HCT116 (cell line): ENCODE measurements at regions of chr14 and their contacts with region 1.

Region 1: GRCh38 chr14:97713023-97713422 is 915.8 kb downstream of the VRK1 start:
- DNase-seq: peak; percentile 73
- ATAC-seq: peak; percentile 73
- H3K4me3 ChIP-seq: no peak overlapping the region
- H3K27ac ChIP-seq: no peak overlapping the region
- H3K4me1 ChIP-seq: peaks cover 0 to 30% of the 10 kb centered on the region in 2 experiments; a peak in 2 of 4 replicates
- H3K27me3 ChIP-seq: no peaks in the 10 kb centered on the region
- CTCF ChIP-seq: no peak
- POLR2A ChIP-seq: no peak
- RAD21 ChIP-seq: no peak

Region 2: DNA sequence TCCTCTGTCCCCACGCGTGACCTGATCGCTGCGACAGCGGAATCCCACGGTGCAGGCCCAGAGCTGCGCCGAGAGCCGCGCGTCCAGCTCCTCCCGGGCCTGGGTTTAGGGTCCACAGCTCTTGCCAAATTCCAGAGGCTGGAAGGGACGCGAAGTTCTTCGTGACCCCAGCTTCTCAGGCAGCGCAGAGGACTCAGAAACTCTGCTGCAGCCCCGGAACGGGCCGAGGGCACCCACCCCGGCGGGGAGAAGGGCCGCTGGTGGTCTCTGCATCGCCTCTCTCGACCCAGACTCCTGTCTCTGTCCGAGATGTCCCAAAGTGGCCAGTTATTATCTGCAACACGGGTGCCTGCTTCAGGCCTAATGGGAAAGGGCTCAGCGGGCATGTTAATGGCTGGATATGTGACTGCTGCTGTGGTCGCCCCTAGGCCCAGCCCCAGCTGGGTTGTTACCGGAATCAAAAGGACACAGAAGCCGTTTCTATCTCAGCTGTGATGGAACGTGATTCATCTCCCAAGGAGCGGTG is 679.4 kb before region 1 on chr14:
- CTCF ChIA-PET with region 1: no interaction called
- POLR2A ChIA-PET with region 1: no interaction called
- RAD21 ChIA-PET with region 1: no interaction called
- intact Hi-C with region 1: no loop called
- DNase-seq: no peak
- ATAC-seq: no peak
- H3K4me3 ChIP-seq: no peak overlapping the region
- H3K27ac ChIP-seq: no peak overlapping the region
- H3K4me1 ChIP-seq: no peaks in the 10 kb centered on the region
- H3K27me3 ChIP-seq: no peaks in the 10 kb centered on the region
- CTCF ChIP-seq: no peak
- POLR2A ChIP-seq: no peak
- RAD21 ChIP-seq: no peak

Region 3: GRCh38 chr14:97185186-97185585 is 527.8 kb before region 1 on chr14:
- CTCF ChIA-PET with region 1: no interaction called
- POLR2A ChIA-PET with region 1: no interaction called
- RAD21 ChIA-PET with region 1: no interaction called
- intact Hi-C with region 1: loop called (anchors 10 kb)
- DNase-seq: no peak
- ATAC-seq: peak; percentile 45
- H3K4me3 ChIP-seq: no peak overlapping the region
- H3K27ac ChIP-seq: no peak overlapping the region
- H3K4me1 ChIP-seq: peaks cover 8 to 16% of the 10 kb centered on the region in 2 experiments
- H3K27me3 ChIP-seq: no peaks in the 10 kb centered on the region
- CTCF ChIP-seq: peak; percentile 59 to 68 (median 61); a peak in 5 of 6 replicates
- POLR2A ChIP-seq: no peak
- RAD21 ChIP-seq: peak; percentile 79

Region 4: GRCh38 chr14:97264516-97265230 is 448.4 kb before region 1 on chr14:
- CTCF ChIA-PET with region 1: no interaction called
- POLR2A ChIA-PET with region 1: no interaction called
- RAD21 ChIA-PET with region 1: no interaction called
- intact Hi-C with region 1: no loop called
- DNase-seq: no peak
- ATAC-seq: peak; percentile 56
- H3K4me3 ChIP-seq: no peak overlapping the region
- H3K27ac ChIP-seq: no peak overlapping the region
- H3K4me1 ChIP-seq: peaks cover 26 to 47% of the 10 kb centered on the region in 2 experiments
- H3K27me3 ChIP-seq: no peaks in the 10 kb centered on the region
- CTCF ChIP-seq: no peak
- POLR2A ChIP-seq: no peak
- RAD21 ChIP-seq: no peak

Region 5: GRCh38 chr14:98059106-98059505 is 346.1 kb after region 1 on chr14:
- CTCF ChIA-PET with region 1: no interaction called
- POLR2A ChIA-PET with region 1: no interaction called
- RAD21 ChIA-PET with region 1: no interaction called
- intact Hi-C with region 1: no loop called
- DNase-seq: no peak
- ATAC-seq: no peak
- H3K4me3 ChIP-seq: no peak overlapping the region
- H3K27ac ChIP-seq: no peak overlapping the region
- H3K4me1 ChIP-seq: no peaks in the 10 kb centered on the region
- H3K27me3 ChIP-seq: no peaks in the 10 kb centered on the region
- CTCF ChIP-seq: no peak
- POLR2A ChIP-seq: no peak
- RAD21 ChIP-seq: no peak